PC-3 (cell line): ENCODE measurements at regions of chr7 and their contacts with region 1.

Region 1: DNA sequence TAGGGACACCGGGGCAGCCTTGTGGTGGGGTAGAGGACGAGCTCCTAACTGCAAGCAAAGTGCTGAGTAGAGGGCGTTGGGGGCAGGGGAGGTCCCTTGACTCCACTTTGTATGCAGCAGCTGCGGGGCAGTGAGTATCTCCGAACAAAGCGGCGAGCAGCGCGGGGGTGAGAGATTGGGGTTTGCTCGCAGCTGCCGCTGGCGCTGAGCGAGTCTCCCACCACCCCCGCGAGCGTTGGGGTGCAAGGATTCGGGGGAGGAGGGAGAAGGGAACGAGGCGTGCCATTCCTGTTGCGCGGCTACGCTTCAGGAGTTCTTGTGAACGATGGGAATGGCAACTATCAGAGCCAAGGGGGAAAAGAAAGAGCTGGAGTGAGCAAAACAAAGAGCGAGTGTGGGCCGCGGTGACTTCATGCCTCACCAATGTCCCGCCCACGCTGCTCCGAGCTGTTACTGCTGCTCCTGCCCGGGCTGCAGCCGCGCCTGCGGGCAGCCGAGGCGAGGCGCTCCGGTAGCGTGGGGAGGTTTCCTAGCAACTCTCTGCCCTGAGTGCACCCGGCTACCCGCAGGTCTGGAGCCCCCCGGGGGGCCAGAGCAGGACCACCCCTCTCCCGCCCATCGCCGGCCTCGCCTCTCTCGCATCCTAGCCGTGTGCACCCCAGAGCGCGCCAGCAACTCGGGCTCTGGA is at the start of gene ITGB8:
- DNase-seq: peak; percentile 79
- ATAC-seq: peak; percentile 67
- H3K4me3 ChIP-seq: peak within 1 kb of the TSS; percentile 89
- H3K27ac ChIP-seq: peak within 1 kb of the TSS; percentile 85
- H3K4me1 ChIP-seq: peaks cover 26% of the 10 kb centered on the region
- H3K27me3 ChIP-seq: no peaks in the 10 kb centered on the region
- CTCF ChIP-seq: no peak
- total RNA-seq, gene ITGB8: 13.9 and 14.0 TPM in 2 replicates

Region 2: DNA sequence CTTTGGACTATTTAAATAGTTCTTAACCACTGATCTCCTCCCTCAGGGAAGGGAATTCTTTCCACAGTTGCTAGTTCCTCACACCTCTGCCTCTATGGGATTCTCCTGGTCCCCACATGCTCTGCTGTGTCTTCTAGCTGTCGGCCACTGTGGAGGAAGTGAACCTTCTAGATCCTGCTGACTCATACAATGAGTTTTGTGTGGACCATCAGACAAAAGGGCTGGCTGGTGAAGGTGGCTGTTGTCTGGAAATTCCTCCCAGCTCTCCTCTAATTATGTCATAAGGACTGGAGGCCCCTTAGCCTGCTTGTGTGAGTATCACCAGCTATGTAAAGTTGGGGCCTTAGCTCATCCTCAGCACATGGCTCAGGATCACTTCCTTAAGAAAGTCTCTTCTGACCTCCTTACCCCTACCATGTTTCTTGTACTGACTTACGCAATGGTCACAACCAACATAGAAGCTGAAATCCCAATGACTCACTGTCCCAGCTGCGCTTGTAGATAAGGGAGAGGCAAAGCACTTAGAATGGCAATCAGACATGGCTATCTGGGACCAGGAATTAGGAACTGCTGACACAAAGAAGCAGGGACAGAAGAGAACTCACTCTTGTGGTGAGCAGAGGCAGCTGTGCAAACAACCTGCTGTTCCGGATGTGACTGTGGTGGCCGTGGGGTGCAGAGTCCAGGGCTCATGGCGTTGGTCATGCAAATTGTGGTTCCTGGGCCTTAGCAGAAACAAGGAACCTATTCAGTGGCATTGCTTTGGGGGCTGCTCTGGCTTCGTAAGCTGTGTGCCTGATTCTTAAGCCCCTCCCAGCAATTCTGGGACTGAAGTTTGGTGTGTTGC is 110.7 kb before region 1 on chr7:
- CTCF ChIA-PET with region 1: no interaction called
- POLR2A ChIA-PET with region 1: no interaction called
- intact Hi-C with region 1: loop called (anchors 1 kb)
- DNase-seq: peak; percentile 90
- ATAC-seq: peak; percentile 55
- H3K4me3 ChIP-seq: no peak overlapping the region
- H3K27ac ChIP-seq: peak overlapping the region; percentile 98
- H3K4me1 ChIP-seq: peaks cover 70% of the 10 kb centered on the region
- H3K27me3 ChIP-seq: no peaks in the 10 kb centered on the region
- CTCF ChIP-seq: no peak

Region 3: GRCh38 chr7:20352573-20353304 is 22.4 kb after region 1 on chr7:
- CTCF ChIA-PET with region 1: interaction called, 5 read pairs
- POLR2A ChIA-PET with region 1: interaction called, 5 read pairs
- intact Hi-C with region 1: loop called (anchors 1 kb)
- DNase-seq: peak; percentile 97
- ATAC-seq: peak; percentile 94
- H3K4me3 ChIP-seq: peak overlapping the region; percentile 45
- H3K27ac ChIP-seq: peak overlapping the region; percentile 95
- H3K4me1 ChIP-seq: peaks cover 46% of the 10 kb centered on the region
- H3K27me3 ChIP-seq: no peaks in the 10 kb centered on the region
- CTCF ChIP-seq: no peak

Region 4: GRCh38 chr7:20402747-20403230 is 72.4 kb after region 1 on chr7:
- CTCF ChIA-PET with region 1: interaction called, 4 read pairs
- POLR2A ChIA-PET with region 1: no interaction called
- intact Hi-C with region 1: loop called (anchors 1 kb)
- DNase-seq: peak; percentile 36
- ATAC-seq: peak; percentile 57
- H3K4me3 ChIP-seq: no peak overlapping the region
- H3K27ac ChIP-seq: no peak overlapping the region
- H3K4me1 ChIP-seq: peaks cover 18% of the 10 kb centered on the region
- H3K27me3 ChIP-seq: no peaks in the 10 kb centered on the region
- CTCF ChIP-seq: peak; percentile 68

Region 5: GRCh38 chr7:20647908-20648776 is 317.8 kb after region 1 on chr7:
- CTCF ChIA-PET with region 1: no interaction called
- POLR2A ChIA-PET with region 1: no interaction called
- intact Hi-C with region 1: loop called (anchors 1 kb)
- DNase-seq: peak; percentile 70
- ATAC-seq: peak; percentile 95
- H3K4me3 ChIP-seq: no peak overlapping the region
- H3K27ac ChIP-seq: no peak overlapping the region
- H3K4me1 ChIP-seq: no peaks in the 10 kb centered on the region
- H3K27me3 ChIP-seq: peaks cover 10% of the 10 kb centered on the region
- CTCF ChIP-seq: peak; percentile 81